Mammary epithelial cell (primary cell): ENCODE measurements at regions of chr1 and their contacts with region 1.

Region 1: GRCh38 chr1:63593303-63593885 is at the start of gene PGM1:
- DNase-seq: peak; percentile 83
- H3K4me3 ChIP-seq: peak within 1 kb of the TSS; percentile 83 to 91 (median 89)
- H3K27ac ChIP-seq: peak within 1 kb of the TSS; percentile 82
- H3K4me1 ChIP-seq: peaks cover 15% of the 10 kb centered on the region
- H3K27me3 ChIP-seq: no peaks in the 10 kb centered on the region
- CTCF ChIP-seq: no peak
- total RNA-seq, gene PGM1: 93.7 to 177 TPM

Region 2: DNA sequence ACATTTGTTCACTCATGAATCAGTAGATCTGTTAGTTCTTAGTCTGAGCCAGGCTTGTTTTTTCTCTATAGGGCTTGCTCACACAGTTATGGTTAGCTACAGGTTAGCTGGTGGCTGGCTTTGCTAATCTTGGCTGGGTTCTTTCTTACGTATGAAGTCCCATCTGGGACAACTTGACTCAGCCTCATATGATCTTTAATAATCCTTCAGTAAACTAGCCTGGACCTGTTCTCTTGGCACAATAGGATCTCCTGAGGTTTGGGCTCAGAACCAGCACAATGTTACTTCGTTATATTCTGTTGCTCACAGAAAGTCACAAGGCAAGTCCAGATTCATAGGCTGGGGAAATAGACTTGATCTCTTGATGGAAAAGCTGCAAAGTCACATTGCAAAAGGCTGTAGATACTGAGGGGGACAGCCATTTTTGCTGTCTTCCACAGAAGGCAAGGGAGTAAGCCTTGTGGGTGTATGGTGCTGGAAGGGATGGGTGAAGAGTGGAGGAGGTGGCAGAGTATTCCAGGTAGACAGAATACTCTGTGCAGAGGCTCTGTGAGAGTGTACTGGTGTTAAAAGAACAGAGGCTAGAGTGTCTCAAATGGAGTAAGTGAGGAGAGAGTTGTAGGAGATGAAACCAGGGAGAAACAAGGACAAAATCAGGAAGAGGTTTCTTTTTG is 45.6 kb before region 1 on chr1:
- CTCF ChIA-PET with region 1: no interaction called
- dilution Hi-C with region 1: no loop called
- in situ Hi-C with region 1: no loop called
- intact Hi-C with region 1: loop called (anchors 5 kb)
- DNase-seq: peak; percentile 99
- H3K4me3 ChIP-seq: peak overlapping the region; percentile 7 to 24 (median 10)
- H3K27ac ChIP-seq: peak overlapping the region; percentile 92
- H3K4me1 ChIP-seq: peaks cover 25% of the 10 kb centered on the region
- H3K27me3 ChIP-seq: no peaks in the 10 kb centered on the region
- CTCF ChIP-seq: no peak

Region 3: DNA sequence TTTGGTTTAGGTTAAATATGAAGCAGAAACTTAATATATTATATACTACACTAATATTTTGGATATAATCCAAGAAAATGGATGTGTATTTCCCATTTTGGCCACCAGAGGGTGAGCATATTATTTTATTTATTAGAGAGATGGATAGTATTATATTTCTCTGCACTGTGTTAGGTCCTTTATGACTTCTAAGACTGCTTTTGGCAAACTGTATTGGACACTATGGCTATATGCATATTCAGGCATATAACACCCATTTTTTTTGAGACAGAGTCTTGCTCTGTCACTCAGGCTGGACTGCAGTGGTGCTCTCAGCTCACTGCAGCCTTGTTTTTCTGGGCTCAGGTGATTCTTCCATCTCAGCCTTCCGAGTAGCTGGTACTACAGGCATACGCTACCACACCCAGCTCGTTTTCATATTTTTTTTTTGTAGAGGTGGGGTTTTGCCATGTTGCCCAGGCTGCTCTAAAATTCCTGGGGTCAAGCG is 18.0 kb before region 1 on chr1:
- CTCF ChIA-PET with region 1: interaction called, 12 read pairs
- dilution Hi-C with region 1: no loop called
- in situ Hi-C with region 1: no loop called
- intact Hi-C with region 1: no loop called
- DNase-seq: peak; percentile 32
- H3K4me3 ChIP-seq: no peak overlapping the region
- H3K27ac ChIP-seq: no peak overlapping the region
- H3K4me1 ChIP-seq: peaks cover 8% of the 10 kb centered on the region
- H3K27me3 ChIP-seq: no peaks in the 10 kb centered on the region
- CTCF ChIP-seq: peak; percentile 57 to 59

Region 4: DNA sequence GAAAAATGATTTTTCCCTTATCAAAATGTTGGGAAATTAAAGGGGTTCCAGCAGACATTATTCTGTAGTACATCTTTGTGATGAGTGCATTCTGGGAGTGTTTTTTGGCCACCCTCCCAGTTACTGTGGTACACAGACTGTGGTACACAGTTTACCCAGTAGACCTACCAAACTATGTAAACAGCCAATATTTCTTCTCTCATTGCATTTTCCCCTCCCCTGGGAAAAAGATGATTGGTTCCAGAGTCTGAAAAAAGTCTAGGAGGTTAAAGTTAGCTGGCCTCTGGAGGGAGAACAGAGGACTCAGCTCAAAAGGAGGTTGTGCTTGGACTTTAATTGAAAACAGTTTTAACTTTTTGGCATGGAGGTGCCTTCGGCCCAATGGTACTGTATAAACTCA is 42.3 kb after region 1 on chr1:
- CTCF ChIA-PET with region 1: no interaction called
- dilution Hi-C with region 1: no loop called
- in situ Hi-C with region 1: no loop called
- intact Hi-C with region 1: no loop called
- DNase-seq: no peak
- H3K4me3 ChIP-seq: no peak overlapping the region
- H3K27ac ChIP-seq: no peak overlapping the region
- H3K4me1 ChIP-seq: peaks cover 9% of the 10 kb centered on the region
- H3K27me3 ChIP-seq: no peaks in the 10 kb centered on the region
- CTCF ChIP-seq: no peak